ENCODE measurements at regions of chrX and their contacts with region 1.

Region 1: DNA sequence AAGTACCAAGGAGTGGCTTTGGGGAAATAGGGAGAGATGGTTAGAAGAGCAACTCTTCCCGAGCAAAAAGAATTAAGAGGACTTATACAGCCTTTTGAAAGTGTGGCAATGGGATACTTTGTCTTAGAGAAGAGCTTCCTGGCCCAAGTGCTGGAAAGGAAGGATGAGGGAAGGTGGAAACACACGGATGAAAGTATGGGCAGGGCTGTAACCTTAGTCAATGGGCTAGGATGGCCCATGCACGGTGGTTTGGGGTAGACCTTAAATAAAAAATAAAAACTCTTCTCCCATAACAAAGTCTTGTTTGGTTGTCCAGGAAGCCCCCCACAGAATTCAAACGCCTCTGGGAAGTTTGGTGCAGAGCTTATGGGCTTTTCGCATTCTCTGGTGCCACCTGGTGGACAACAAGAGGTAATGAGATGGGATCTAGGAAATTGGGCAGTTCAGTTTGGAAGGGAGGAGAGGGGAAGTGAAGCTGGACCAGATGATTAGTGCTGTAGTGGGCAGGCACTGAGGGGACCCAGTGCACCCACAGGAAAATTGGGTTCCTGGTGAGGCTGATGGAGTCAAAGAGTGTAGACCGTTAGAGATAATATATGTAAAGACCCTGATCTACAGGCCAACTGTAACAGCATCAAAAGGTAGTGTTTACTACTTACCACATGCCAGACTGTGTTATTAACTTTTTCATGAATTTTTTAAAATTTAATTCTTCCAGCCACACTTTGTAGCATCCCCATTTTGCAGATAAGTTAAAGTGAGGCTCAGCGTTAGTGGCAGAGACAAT is 13.8 kb upstream of the ENOX2 start:
- DNase-seq: peak; percentile 63 to 74 (median 67)
- ATAC-seq: peak; percentile 84
- H3K4me3 ChIP-seq: no peak overlapping the region
- H3K27ac ChIP-seq: no peak overlapping the region
- H3K4me1 ChIP-seq: no peaks in the 10 kb centered on the region
- H3K27me3 ChIP-seq: no peaks in the 10 kb centered on the region
- CTCF ChIP-seq: peak; percentile 71 to 80 (median 80)
- EP300 ChIP-seq: no peak
- POLR2A ChIP-seq: no peak
- RAD21 ChIP-seq: peak; percentile 91 to 94

Region 2: GRCh38 chrX:130330706-130331105 is 586.1 kb before region 1 on chrX:
- CTCF ChIA-PET with region 1: interaction called, 3 read pairs
- POLR2A ChIA-PET with region 1: no interaction called
- in situ Hi-C with region 1: no loop called
- intact Hi-C with region 1: loop called (anchors 2 kb)
- DNase-seq: peak; percentile 47 to 78 (median 56)
- ATAC-seq: peak; percentile 98
- H3K4me3 ChIP-seq: no peak overlapping the region
- H3K27ac ChIP-seq: no peak overlapping the region
- H3K4me1 ChIP-seq: peaks cover 0 to 2% of the 10 kb centered on the region in 2 experiments; a peak in 2 of 5 replicates
- H3K27me3 ChIP-seq: no peaks in the 10 kb centered on the region
- CTCF ChIP-seq: peak; percentile 70 to 77 (median 74)
- EP300 ChIP-seq: no peak
- POLR2A ChIP-seq: no peak
- RAD21 ChIP-seq: peak; percentile 64 to 81

Region 3: DNA sequence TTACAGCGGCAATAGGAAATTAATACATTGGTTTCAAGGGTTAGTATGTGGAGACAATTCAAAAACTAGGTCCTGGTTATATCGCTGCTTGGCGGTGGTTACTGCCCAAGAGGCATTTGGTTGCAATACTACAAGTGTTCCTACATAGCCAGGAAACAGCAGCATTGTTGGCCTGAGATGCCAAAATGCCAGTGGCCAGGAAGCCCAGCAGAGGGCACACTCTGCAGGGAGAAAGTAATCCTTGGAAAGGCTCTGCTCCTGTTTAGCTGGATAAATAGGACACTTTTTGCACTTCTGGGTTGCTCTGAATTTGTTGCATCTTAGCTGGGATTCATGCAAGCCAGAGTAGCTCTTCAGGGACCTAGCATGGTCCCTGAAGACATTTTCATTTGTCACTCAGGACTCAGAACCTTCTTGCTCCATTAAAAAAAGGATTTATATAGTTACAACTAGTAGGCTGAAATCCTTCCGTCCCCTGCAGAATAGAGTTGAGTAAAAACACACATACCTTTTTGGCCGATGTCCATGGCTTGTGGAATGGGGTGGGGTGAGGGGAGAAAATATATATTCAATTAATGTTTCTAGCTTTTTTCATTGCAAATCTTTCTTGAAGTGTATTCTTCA is 523.3 kb before region 1 on chrX:
- CTCF ChIA-PET with region 1: interaction called, 8 read pairs
- POLR2A ChIA-PET with region 1: no interaction called
- in situ Hi-C with region 1: loop called (anchors 5 kb)
- intact Hi-C with region 1: loop called (anchors 1 kb)
- DNase-seq: peak in 3 of 4 experiments; percentile 10 to 57 (median 49)
- ATAC-seq: peak; percentile 74
- H3K4me3 ChIP-seq: no peak overlapping the region
- H3K27ac ChIP-seq: no peak overlapping the region
- H3K4me1 ChIP-seq: no peaks in the 10 kb centered on the region; a peak in 1 of 5 replicates
- H3K27me3 ChIP-seq: peaks cover 0 to 5% of the 10 kb centered on the region in 2 experiments; a peak in 2 of 5 replicates
- CTCF ChIP-seq: peak; percentile 66 to 69 (median 66)
- EP300 ChIP-seq: no peak
- POLR2A ChIP-seq: no peak
- RAD21 ChIP-seq: peak; percentile 59 to 77

Region 4: GRCh38 chrX:130539721-130540321 is 377.0 kb before region 1 on chrX:
- CTCF ChIA-PET with region 1: interaction called, 3 read pairs
- POLR2A ChIA-PET with region 1: no interaction called
- in situ Hi-C with region 1: loop called (anchors 10 kb)
- intact Hi-C with region 1: loop called (anchors 2 kb)
- DNase-seq: peak; percentile 43 to 76 (median 46)
- ATAC-seq: peak; percentile 87
- H3K4me3 ChIP-seq: no peak overlapping the region
- H3K27ac ChIP-seq: no peak overlapping the region
- H3K4me1 ChIP-seq: no peaks in the 10 kb centered on the region; a peak in 1 of 5 replicates
- H3K27me3 ChIP-seq: peaks cover 0 to 6% of the 10 kb centered on the region in 2 experiments; a peak in 1 of 5 replicates
- CTCF ChIP-seq: peak; percentile 71 to 75 (median 73)
- EP300 ChIP-seq: no peak
- POLR2A ChIP-seq: no peak
- RAD21 ChIP-seq: peak; percentile 54 to 74

Region 5: GRCh38 chrX:130575831-130576389 is 340.9 kb before region 1 on chrX:
- CTCF ChIA-PET with region 1: interaction called, 8 read pairs
- POLR2A ChIA-PET with region 1: interaction called, 3 read pairs
- in situ Hi-C with region 1: no loop called
- intact Hi-C with region 1: loop called (anchors 2 kb)
- DNase-seq: peak; percentile 29 to 65 (median 42)
- ATAC-seq: peak; percentile 88
- H3K4me3 ChIP-seq: no peak overlapping the region
- H3K27ac ChIP-seq: no peak overlapping the region
- H3K4me1 ChIP-seq: no peaks in the 10 kb centered on the region
- H3K27me3 ChIP-seq: no peaks in the 10 kb centered on the region
- CTCF ChIP-seq: peak; percentile 70 to 85 (median 82)
- EP300 ChIP-seq: no peak
- POLR2A ChIP-seq: no peak
- RAD21 ChIP-seq: peak; percentile 63 to 81

Measured in K562 (cell line).